ENCODE measurements at regions of chr9 and their contacts with region 1.

Region 1: DNA sequence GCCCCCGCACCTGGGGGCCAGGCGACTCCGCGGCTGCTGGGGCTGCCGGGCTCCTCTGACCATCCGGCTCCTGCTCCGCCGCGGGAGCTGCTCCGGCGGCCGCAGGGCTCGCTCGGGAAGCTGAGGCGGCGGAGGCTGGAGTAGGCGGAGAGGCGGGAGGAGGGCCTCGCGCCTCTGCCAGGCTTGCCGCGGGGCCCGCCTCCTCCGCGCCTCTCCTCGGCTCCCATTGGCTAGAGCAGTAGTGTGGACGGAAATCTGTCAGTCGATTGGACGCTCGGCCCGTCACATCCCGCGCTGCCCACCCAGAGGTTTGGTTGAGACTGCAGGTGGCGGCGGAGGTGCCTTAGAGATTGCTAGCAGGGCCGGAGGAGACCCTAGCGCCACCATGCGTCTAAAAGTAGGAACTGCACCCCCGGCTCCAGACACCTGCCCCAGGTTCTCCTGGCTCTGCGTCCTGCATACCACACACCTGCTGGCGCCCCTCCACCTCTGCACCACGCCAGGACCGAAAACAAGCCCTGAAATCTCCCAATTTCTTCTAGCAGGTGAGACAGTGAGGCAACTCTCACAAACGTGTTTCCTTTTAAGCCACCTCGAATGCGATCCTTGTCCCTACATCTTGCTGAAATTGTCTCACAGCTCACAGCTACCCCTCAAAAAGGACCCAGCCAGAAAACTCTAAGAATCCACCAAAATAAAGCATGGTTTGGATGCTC is at the start of gene SCAI:
- DNase-seq: peak; percentile 99
- ATAC-seq: peak; percentile 100
- H3K4me3 Mint-ChIP-seq: peak within 1 kb of the TSS; percentile 84
- H3K27ac Mint-ChIP-seq: peak within 1 kb of the TSS; percentile 89
- H3K4me1 Mint-ChIP-seq: peaks cover 25% of the 10 kb centered on the region
- H3K27me3 Mint-ChIP-seq: no peaks in the 10 kb centered on the region
- total RNA-seq, gene SCAI: 10.7 to 10.8 TPM

Region 2: DNA sequence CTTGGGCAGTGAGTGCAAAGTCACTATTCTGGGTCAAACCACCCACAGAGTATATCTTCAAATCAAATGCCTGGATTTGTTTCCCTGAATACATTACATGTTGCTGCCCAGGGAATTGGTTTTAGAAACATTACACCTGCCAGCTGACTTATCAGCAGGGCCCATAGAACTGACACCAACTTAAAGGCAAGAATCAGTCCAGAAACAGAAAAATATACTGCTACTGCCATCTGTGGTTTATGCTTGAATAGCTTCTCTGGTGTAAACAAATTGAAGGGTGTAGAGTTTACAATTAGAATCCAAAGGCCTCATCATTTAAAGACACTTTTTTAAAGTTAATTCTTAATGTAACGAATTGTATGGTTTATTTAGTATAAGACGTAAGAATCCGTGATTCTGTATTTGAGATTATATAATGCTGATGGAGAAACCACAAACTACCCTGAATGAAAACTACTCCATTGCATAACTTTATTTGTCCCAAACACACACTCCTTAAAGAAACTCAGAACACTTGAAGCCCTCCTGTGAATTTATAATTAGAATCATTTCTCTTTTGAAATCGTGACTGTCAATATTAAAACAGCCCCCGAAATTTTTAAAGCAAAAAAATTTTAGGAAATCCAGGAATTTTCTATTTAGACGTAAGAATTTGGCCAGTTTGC is 378.6 kb before region 1 on chr9:
- CTCF ChIA-PET with region 1: no interaction called
- POLR2A ChIA-PET with region 1: no interaction called
- DNase-seq: no peak
- ATAC-seq: no peak
- H3K4me3 Mint-ChIP-seq: no peak overlapping the region
- H3K27ac Mint-ChIP-seq: no peak overlapping the region
- H3K4me1 Mint-ChIP-seq: peaks cover 8% of the 10 kb centered on the region
- H3K27me3 Mint-ChIP-seq: peaks cover 69% of the 10 kb centered on the region

Region 3: GRCh38 chr9:125113956-125114355 is 29.6 kb before region 1 on chr9:
- CTCF ChIA-PET with region 1: interaction called, 11 read pairs
- POLR2A ChIA-PET with region 1: interaction called, 3 read pairs
- DNase-seq: no peak
- ATAC-seq: no peak
- H3K4me3 Mint-ChIP-seq: no peak overlapping the region
- H3K27ac Mint-ChIP-seq: no peak overlapping the region
- H3K4me1 Mint-ChIP-seq: peaks cover 7% of the 10 kb centered on the region
- H3K27me3 Mint-ChIP-seq: no peaks in the 10 kb centered on the region

Region 4: GRCh38 chr9:125126019-125126746 is 17.4 kb before region 1 on chr9:
- CTCF ChIA-PET with region 1: interaction called, 27 read pairs
- POLR2A ChIA-PET with region 1: no interaction called
- DNase-seq: peak; percentile 93
- ATAC-seq: peak; percentile 99
- H3K4me3 Mint-ChIP-seq: peak overlapping the region; percentile 63
- H3K27ac Mint-ChIP-seq: peak overlapping the region; percentile 96
- H3K4me1 Mint-ChIP-seq: peaks cover 35% of the 10 kb centered on the region
- H3K27me3 Mint-ChIP-seq: no peaks in the 10 kb centered on the region

Region 5: DNA sequence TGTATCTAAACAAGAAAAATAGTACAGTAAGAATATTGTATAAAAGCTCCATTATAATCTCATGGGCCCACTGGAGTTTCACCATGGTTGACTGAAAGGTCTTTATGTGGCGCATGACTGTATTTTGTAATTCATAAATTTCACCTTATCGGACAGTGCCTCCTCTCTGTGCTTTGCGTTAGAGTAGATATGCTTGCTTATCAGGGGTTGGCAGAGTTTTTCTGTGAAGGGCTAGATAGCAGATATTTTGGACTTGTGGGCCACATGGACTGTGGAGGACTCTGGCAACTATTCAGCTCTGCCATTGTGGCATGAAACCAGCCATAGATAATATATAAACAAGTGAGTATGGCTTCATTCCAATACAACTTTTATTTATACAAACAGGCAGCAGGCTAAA is 141.3 kb after region 1 on chr9:
- CTCF ChIA-PET with region 1: no interaction called
- POLR2A ChIA-PET with region 1: no interaction called
- DNase-seq: no peak
- ATAC-seq: no peak
- H3K4me3 Mint-ChIP-seq: no peak overlapping the region
- H3K27ac Mint-ChIP-seq: no peak overlapping the region
- H3K4me1 Mint-ChIP-seq: peaks cover 6% of the 10 kb centered on the region
- H3K27me3 Mint-ChIP-seq: no peaks in the 10 kb centered on the region

Measured in activated CD8-positive, alpha-beta T cell treated with anti-CD3 and anti-CD28 coated beads, Interleukin-2, amount 10 ng/mL, durations not matched to agents 7 days and 5 days (primary cell).